Activated CD4-positive, alpha-beta T cell treated with anti-CD3 and anti-CD28 coated beads for 36 hours (primary cell): ENCODE measurements at regions of chr17 and their contacts with region 1.

Region 1: DNA sequence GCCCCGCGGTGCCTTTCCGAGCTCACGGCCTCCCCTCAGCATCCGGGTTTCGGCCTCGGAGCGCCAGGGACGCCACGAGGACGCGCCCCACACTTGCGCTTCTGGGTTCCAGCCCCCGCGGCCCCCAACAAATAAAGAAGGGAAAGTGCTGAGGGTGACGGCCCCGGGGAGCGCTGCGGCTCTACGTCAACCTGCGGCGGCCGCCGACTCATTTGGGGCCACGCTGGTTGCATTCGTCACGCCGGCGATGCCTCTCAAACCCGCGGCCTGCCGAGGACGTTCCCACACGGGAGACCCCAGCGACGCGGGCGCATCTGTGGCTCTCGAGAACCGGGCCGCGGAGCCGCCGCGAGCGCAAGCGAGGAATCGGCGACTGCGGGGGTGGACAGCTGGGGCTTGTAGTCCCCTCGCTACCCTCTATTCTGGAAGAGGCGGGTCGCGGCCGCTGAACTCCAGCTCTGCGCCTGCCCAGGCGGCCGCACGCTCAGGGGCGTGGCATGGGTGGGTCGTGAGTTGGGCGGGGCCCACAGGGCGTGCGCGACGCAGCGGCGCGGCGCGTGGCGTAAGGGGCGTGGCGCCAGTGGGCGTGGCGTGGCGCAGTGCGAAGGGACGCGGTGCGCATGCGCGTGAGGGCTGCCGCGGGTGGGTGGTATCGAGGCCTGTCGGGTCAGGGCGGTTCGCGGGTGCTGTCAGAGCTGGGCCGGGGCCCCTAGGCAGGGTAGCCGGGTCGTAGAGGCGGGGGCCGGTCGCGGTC is at the start of gene AMZ2:
- DNase-seq: peak; percentile 98
- ATAC-seq: peak; percentile 84
- H3K4me3 Mint-ChIP-seq: peak within 1 kb of the TSS; percentile 88
- H3K27ac Mint-ChIP-seq: peak within 1 kb of the TSS; percentile 99
- H3K4me1 Mint-ChIP-seq: peaks cover 37% of the 10 kb centered on the region
- H3K27me3 Mint-ChIP-seq: no peaks in the 10 kb centered on the region
- total RNA-seq, gene AMZ2: 119 to 150 TPM

Region 2: GRCh38 chr17:68101075-68101992 is 146.3 kb before region 1 on chr17:
- CTCF ChIA-PET with region 1: no interaction called
- POLR2A ChIA-PET with region 1: no interaction called
- intact Hi-C with region 1: loop called in 1 of 2 experiments (anchors 1 kb)
- DNase-seq: peak; percentile 71
- ATAC-seq: peak; percentile 63
- H3K4me3 Mint-ChIP-seq: peak overlapping the region; percentile 87
- H3K27ac Mint-ChIP-seq: peak overlapping the region; percentile 91
- H3K4me1 Mint-ChIP-seq: peaks cover 31% of the 10 kb centered on the region
- H3K27me3 Mint-ChIP-seq: no peaks in the 10 kb centered on the region

Region 3: GRCh38 chr17:68179926-68180285 is 67.7 kb before region 1 on chr17:
- CTCF ChIA-PET with region 1: interaction called, 3 read pairs
- POLR2A ChIA-PET with region 1: interaction called, 7 read pairs
- intact Hi-C with region 1: loop called (anchors 2 kb)
- DNase-seq: no peak
- ATAC-seq: no peak
- H3K4me3 Mint-ChIP-seq: no peak overlapping the region
- H3K27ac Mint-ChIP-seq: no peak overlapping the region
- H3K4me1 Mint-ChIP-seq: peaks cover 41% of the 10 kb centered on the region
- H3K27me3 Mint-ChIP-seq: no peaks in the 10 kb centered on the region

Region 4: DNA sequence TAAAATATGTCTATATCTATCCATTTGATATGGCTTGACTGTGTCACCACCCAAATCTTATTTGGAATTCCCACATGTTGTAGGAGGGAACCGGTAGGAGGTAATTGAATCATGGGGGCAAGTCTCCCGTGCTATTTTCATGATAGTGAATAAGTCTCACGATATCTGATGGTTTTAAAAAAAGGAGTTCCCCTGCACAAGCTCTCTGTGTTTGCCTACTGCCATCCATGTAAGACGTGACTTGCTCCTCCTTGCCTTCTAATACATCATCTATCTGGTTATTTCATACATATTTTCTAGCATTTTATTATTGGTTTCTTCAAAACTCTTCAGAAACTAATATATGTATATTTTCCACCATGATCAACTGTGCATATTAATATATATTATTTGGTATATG is 57.1 kb before region 1 on chr17:
- CTCF ChIA-PET with region 1: no interaction called
- POLR2A ChIA-PET with region 1: no interaction called
- intact Hi-C with region 1: no loop called
- DNase-seq: no peak
- ATAC-seq: no peak
- H3K4me3 Mint-ChIP-seq: no peak overlapping the region
- H3K27ac Mint-ChIP-seq: no peak overlapping the region
- H3K4me1 Mint-ChIP-seq: peaks cover 8% of the 10 kb centered on the region
- H3K27me3 Mint-ChIP-seq: peaks cover 5% of the 10 kb centered on the region

Region 5: GRCh38 chr17:68512247-68512982 is 264.8 kb after region 1 on chr17 and contains the start of gene PRKAR1A:
- CTCF ChIA-PET with region 1: no interaction called
- POLR2A ChIA-PET with region 1: no interaction called
- intact Hi-C with region 1: loop called in 1 of 2 experiments (anchors 1 kb)
- DNase-seq: peak; percentile 95
- ATAC-seq: peak; percentile 92
- H3K4me3 Mint-ChIP-seq: peak within 1 kb of the TSS; percentile 93
- H3K27ac Mint-ChIP-seq: peak within 1 kb of the TSS; percentile 97
- H3K4me1 Mint-ChIP-seq: peaks cover 42% of the 10 kb centered on the region
- H3K27me3 Mint-ChIP-seq: no peaks in the 10 kb centered on the region
- total RNA-seq, gene PRKAR1A: 165 to 167 TPM